ENCODE measurements at regions of chr9 and their contacts with region 1.

Region 1: GRCh38 chr9:130866474-130866965 is 30.1 kb downstream of the QRFP start:
- DNase-seq: peak; percentile 54
- CTCF ChIP-seq: peak; percentile 61

Region 2: DNA sequence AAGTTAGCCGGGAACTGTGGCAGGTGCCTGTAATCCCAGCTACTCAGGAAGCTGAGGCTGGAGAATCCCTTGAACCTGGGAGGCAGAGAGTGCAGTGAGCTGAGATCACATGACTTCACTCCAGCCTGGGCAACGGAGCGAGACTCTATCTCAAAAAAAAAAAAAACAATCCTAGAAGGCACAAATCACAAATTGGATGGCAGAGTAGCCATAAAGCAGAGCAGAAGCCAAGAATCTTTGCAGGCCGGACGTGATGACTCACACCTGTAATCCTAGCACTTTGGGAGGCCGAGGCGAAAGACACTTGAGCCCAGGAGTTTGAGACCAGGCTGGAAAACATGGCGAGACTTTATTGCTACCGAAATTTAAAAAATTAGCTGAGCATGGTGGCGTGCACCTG is 296.3 kb before region 1 on chr9:
- in situ Hi-C with region 1: no loop called
- DNase-seq: no peak
- CTCF ChIP-seq: no peak

Region 3: DNA sequence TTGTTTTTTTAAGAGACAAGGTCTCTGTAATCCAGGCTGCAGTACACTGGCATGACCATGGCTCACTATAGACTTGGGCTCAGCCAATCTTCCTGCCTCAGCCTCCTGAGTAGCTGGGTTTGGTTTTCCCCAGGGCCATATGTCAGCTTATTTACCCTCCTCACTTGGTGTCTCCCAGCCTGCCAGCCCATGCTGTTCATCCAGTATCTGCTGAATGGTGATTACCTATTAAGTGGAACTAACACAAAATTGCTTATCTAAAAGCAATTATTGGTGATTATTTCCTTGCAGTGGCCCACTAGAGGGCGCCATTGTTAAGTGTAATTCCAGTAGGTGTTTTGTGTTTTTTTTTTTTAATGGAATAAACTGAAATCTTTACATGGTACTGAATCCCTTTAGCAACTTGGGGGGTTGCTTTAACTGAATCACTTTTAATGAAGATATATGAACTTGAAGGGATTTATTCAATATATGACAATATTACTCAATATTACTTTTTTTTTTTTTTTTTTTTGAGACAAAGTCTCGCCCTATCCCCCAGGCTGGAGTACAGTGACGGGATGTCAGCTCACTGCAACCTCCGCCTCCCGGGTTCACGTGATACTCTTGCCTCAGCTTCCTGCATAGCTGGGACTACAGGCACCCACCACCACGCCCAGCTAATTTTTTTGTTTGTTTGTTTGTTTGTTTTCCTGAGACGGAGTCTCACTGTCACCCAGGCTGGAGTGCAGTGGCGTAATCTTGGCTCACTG is 159.1 kb before region 1 on chr9:
- in situ Hi-C with region 1: loop called (anchors 5 kb)
- DNase-seq: peak; percentile 40
- CTCF ChIP-seq: peak; percentile 40

Region 4: DNA sequence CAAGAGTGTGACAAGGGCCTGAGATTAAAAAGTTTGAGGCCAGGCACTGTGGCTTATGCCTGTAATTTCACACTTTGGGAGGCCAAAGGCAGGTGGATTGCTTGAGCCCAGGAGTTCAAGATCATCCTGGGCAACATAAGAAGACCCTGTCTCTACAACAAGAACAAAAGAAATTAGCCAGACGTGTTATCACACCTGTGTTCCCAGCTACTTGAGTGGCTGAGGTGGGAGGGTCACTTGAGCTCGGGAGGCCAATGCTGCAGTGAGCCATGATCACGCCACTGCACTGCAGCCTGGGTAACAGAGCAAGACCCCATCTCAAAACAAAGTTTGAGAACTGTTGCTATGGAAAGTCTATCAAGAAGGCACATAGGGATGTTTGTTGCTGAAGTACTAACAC is 148.0 kb before region 1 on chr9:
- in situ Hi-C with region 1: no loop called
- DNase-seq: no peak
- CTCF ChIP-seq: no peak

Region 5: GRCh38 chr9:130770679-130771442 is 95.7 kb before region 1 on chr9:
- in situ Hi-C with region 1: loop called (anchors 10 kb)
- DNase-seq: peak; percentile 65
- CTCF ChIP-seq: peak; percentile 41

Region 6: DNA sequence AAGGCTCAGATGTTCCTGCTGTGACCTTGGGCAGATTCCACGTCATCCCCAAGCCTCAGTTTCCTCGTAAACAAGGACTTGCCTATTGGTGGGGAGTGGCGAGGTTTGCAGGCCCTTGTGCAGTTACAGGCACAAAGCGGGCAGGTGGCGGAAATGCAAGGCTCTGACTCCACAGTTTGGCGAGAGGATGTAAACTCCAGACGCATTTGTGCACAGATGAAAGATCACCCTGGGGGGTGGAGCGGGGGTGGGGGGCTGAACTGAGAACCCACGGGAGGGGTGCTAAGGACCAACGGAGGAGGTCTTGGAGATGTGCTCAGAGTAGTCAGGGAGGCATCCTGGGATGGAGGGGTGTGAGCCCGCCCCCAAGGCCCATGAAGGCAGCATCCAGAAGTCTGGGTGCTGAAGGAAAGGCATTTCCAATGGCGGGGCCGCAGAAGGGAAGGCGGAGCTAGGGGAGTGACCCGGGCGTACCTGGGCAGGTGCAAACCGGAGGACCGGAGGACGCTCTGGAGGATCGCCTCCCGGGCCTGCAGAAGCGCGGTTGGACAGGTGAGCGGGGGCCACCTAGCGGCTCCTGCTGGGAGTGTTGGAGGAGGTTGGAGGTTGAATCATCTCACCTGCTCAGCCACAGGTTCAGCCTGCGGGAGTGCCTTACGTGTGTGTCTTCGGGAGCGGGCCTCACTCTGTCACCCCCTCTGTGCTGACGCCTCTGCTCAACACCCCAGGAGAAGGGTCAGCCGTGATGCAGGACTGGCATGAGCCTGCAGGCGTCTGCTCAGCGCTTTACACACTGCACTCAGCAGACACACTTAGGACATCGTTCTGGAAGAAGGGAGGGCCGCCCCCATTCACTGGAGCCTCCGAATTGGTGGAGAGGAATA is 74.4 kb after region 1 on chr9:
- in situ Hi-C with region 1: loop called (anchors 10 kb)
- DNase-seq: peak; percentile 90
- CTCF ChIP-seq: peak; percentile 94

Measured in GM13976 (cell line).